RWPE1 (cell line): ENCODE measurements at regions of chr5 and their contacts with region 1.

Region 1: DNA sequence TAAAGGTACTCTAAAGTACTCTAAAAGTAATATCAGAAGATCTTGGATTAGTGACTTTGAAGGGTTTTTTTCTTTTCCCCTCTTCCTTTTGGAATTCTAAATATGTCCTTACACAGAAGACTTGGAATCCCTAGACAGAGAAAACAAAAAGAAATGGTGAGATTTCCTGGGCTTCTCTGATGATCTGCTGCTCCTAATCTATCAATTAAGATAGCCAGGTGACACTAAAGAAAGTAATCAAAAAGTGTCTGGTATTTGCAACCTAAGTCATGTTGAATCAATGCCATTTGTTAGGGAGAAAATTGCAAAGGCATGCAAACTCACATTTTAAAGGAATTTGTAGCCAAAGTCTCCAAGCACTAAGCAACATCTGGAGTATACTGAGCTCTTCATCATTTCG is 29.5 kb upstream of the MYO10 start:
- DNase-seq: no peak
- H3K27ac ChIP-seq: no peak overlapping the region
- CTCF ChIP-seq: no peak

Region 2: GRCh38 chr5:16713386-16713928 is 252.1 kb before region 1 on chr5:
- CTCF ChIA-PET with region 1: interaction called, 10 read pairs
- POLR2A ChIA-PET with region 1: no interaction called
- DNase-seq: no peak
- H3K27ac ChIP-seq: no peak overlapping the region
- CTCF ChIP-seq: no peak